AG04449 (cell line): ENCODE measurements at regions of chr12 and their contacts with region 1.

Region 1: GRCh38 chr12:71636704-71637115 is 26.9 kb downstream of the ZFC3H1 start:
- DNase-seq: no peak
- H3K4me3 ChIP-seq: no peak overlapping the region
- CTCF ChIP-seq: peak; percentile 65

Region 2: GRCh38 chr12:71533703-71534102 is 103.0 kb before region 1 on chr12:
- CTCF ChIA-PET with region 1: no interaction called
- POLR2A ChIA-PET with region 1: no interaction called
- DNase-seq: no peak
- H3K4me3 ChIP-seq: no peak overlapping the region
- CTCF ChIP-seq: no peak

Region 3: GRCh38 chr12:71626098-71626497 is 10.6 kb before region 1 on chr12:
- CTCF ChIA-PET with region 1: interaction called, 29 read pairs
- POLR2A ChIA-PET with region 1: no interaction called
- DNase-seq: no peak
- H3K4me3 ChIP-seq: no peak overlapping the region
- CTCF ChIP-seq: no peak